CD4-positive, alpha-beta memory T cell (primary cell): ENCODE measurements at regions of chr19 and their contacts with region 1.

Region 1: DNA sequence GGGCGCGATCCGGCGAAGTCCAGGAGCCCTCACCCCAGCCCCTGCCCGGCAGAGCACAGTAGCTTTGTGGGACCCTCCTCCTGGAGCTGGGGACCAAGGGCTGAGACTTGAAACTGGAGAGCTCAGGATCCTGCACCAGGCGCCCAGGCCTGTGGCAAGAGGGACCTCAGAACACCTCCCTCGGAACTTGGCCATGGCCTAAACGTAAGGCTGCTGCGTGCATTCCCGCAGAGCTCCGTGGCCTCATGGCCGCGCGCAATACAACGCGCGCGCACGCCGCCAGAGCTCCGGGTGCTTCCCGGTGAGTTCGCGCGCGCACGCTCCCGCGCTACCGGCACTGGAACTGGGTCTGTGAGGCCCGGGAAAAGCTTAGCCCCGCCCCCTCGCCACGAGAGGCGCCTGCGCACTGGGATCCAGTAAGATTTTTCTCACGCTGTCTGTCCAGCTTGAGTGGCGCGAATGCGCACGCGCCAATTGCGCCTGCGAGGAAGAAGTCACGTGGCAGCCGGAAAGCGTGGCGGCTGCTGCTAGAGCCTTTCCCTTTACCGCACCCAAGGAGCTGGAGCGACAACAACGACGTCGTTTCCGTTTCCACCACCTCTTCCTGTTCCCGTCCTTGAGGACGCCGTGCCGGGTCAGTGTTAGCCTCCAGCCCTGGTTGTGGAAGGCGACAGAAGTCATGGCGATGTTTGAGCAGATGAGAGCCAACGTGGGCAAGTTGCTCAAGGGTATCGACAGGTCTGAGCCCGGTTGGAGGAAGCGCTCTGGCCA is at the start of gene EIF3K:
- DNase-seq: peak; percentile 95 to 97 (median 96)
- H3K4me3 ChIP-seq: peak within 1 kb of the TSS; percentile 97 to 99
- H3K4me3 Mint-ChIP-seq: peak within 1 kb of the TSS; percentile 95 to 100 (median 100)
- H3K27ac ChIP-seq: peak within 1 kb of the TSS; percentile 90
- H3K27ac Mint-ChIP-seq: peak within 1 kb of the TSS; percentile 93 to 100 (median 99)
- H3K4me1 ChIP-seq: peaks cover 57% of the 10 kb centered on the region
- H3K4me1 Mint-ChIP-seq: peaks cover 28 to 60% (median 45%) of the 10 kb centered on the region in 4 donors
- H3K27me3 ChIP-seq: no peaks in the 10 kb centered on the region
- H3K27me3 Mint-ChIP-seq: no peaks in the 10 kb centered on the region
- total RNA-seq, gene EIF3K: 320 to 340 TPM

Region 2: DNA sequence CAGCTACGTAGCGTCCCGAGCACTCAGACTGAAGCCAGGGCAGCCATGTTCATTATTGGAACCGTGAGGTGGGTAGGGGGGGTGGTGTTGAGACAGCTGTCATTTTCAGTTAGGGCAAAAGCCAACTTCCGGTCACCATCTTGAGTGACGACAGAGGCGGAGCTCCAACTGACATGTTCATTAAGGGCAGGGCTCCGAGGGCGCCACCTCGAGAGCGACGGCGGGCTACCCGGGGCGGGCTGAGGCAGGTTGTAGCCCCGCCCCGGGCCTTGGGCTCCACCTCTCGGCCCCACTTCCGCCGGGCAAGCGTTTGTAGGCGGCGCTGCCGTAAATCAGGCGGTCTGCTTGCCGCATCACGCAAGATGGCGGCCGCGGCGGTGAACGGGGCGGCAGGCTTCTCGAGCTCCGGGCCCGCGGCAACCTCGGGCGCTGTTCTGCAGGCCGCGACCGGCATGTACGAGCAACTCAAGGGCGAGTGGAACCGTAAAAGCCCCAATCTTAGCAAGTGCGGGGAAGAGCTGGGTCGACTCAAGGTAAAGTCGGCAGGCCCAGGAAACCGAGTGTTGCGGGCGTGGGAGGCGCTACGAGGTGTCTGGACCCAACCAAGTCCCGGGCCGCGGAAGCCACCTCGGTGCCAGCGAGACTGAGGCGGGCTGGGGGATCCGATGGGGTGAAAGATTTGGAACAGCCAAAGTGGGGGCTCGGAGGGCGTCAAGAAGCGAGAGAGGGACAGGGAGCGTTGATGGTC is 244.2 kb before region 1 on chr19 and contains the start of gene PSMD8:
- CTCF ChIA-PET with region 1: no interaction called
- POLR2A ChIA-PET with region 1: interaction called, 9 read pairs
- intact Hi-C with region 1: loop called (anchors 10 kb)
- DNase-seq: peak; percentile 98 to 99 (median 99)
- H3K4me3 ChIP-seq: peak within 1 kb of the TSS; percentile 71 to 97
- H3K4me3 Mint-ChIP-seq: peak within 1 kb of the TSS; percentile 96 to 99 (median 98)
- H3K27ac ChIP-seq: peak within 1 kb of the TSS; percentile 94
- H3K27ac Mint-ChIP-seq: peak within 1 kb of the TSS; percentile 90 to 99 (median 98)
- H3K4me1 ChIP-seq: peaks cover 30% of the 10 kb centered on the region
- H3K4me1 Mint-ChIP-seq: peaks cover 19 to 34% (median 24%) of the 10 kb centered on the region in 4 donors
- H3K27me3 ChIP-seq: no peaks in the 10 kb centered on the region
- H3K27me3 Mint-ChIP-seq: peaks cover 2% of the 10 kb centered on the region in 2 donors
- total RNA-seq, gene PSMD8: 89.6 to 90.6 TPM

Region 3: DNA sequence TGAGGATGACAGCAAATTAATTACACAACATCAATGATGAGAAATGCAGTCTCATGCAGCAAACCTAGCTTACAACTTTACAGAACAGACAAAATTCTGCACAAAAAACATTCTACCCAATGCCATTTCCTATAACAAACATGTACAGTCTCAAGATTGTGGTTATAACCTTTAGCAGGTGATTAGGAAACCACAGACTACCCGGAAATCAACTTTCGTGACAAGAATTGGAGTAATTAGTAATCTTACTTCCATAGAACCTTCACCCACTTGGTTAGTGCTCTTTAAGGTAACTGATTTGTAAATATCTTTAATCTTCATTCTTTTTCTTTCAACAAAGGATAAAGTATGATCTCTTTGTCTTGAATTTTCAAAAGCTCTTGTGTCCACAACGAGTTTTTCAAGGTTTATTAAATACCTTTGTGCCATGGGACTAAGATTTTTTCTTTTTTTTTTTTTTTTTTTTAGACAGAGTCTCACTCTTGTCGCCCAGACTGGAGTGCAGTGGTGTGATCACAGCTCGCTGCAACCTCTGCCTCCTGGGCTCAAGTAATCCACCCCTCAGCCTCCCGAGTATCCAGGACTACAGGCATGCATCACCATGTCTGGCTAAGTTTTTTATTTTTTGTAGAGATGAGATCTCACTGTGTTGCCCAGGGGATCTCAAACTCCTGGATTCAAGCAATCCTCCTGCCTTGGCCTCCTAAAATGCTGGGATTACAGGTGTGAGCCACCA is 79.8 kb before region 1 on chr19:
- CTCF ChIA-PET with region 1: interaction called, 31 read pairs
- POLR2A ChIA-PET with region 1: interaction called, 36 read pairs
- intact Hi-C with region 1: loop called (anchors 1 kb)
- DNase-seq: peak; percentile 66 to 81 (median 72)
- H3K4me3 ChIP-seq: peak overlapping the region in 1 of 2 donors; percentile 33
- H3K4me3 Mint-ChIP-seq: peak overlapping the region; percentile 43 to 82 (median 69)
- H3K27ac ChIP-seq: peak overlapping the region; percentile 12
- H3K27ac Mint-ChIP-seq: peak overlapping the region; percentile 82 to 95 (median 87)
- H3K4me1 ChIP-seq: peaks cover 44% of the 10 kb centered on the region
- H3K4me1 Mint-ChIP-seq: peaks cover 24 to 61% (median 41%) of the 10 kb centered on the region in 4 donors
- H3K27me3 ChIP-seq: no peaks in the 10 kb centered on the region
- H3K27me3 Mint-ChIP-seq: no peaks in the 10 kb centered on the region

Region 4: DNA sequence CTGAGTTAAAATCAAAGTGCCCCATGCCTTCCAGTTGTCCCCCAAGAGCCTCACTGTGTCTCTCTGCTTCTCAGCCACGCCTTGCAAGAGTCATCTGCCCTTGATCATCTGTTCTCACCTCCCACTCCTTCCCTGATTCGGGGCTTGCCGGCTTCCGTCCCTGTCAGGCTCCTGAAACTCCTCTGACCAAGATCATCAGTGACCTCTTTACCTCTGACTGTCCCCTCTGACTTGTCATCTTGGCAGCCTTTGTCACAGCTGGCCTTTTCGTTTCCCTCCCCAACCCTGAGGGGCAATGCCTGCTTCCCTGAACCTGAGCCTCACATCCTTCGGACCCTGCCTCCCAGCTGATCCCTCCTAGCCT is 67.3 kb before region 1 on chr19:
- CTCF ChIA-PET with region 1: interaction called, 18 read pairs
- POLR2A ChIA-PET with region 1: interaction called, 15 read pairs
- intact Hi-C with region 1: loop called (anchors 2 kb)
- DNase-seq: no peak
- H3K4me3 ChIP-seq: no peak overlapping the region
- H3K4me3 Mint-ChIP-seq: peak overlapping the region in 6 of 8 donors; percentile 7 to 64 (median 29)
- H3K27ac ChIP-seq: no peak overlapping the region
- H3K27ac Mint-ChIP-seq: peak overlapping the region in 5 of 7 donors; percentile 38 to 74 (median 64)
- H3K4me1 ChIP-seq: peaks cover 25% of the 10 kb centered on the region
- H3K4me1 Mint-ChIP-seq: peaks cover 18 to 36% (median 23%) of the 10 kb centered on the region in 4 donors
- H3K27me3 ChIP-seq: no peaks in the 10 kb centered on the region
- H3K27me3 Mint-ChIP-seq: peaks cover 0 to 3% of the 10 kb centered on the region in 2 donors

Region 5: GRCh38 chr19:38647368-38647965 is 28.7 kb after region 1 on chr19 and contains the start of gene ACTN4:
- CTCF ChIA-PET with region 1: interaction called, 3 read pairs
- POLR2A ChIA-PET with region 1: interaction called, 21 read pairs
- intact Hi-C with region 1: no loop called
- DNase-seq: peak; percentile 98 to 100 (median 100)
- H3K4me3 ChIP-seq: peak within 1 kb of the TSS; percentile 80 to 81
- H3K4me3 Mint-ChIP-seq: peak within 1 kb of the TSS; percentile 91 to 98 (median 95)
- H3K27ac ChIP-seq: peak within 1 kb of the TSS; percentile 74
- H3K27ac Mint-ChIP-seq: peak within 1 kb of the TSS; percentile 85 to 94 (median 91)
- H3K4me1 ChIP-seq: peaks cover 50% of the 10 kb centered on the region
- H3K4me1 Mint-ChIP-seq: peaks cover 29 to 52% (median 41%) of the 10 kb centered on the region in 4 donors
- H3K27me3 ChIP-seq: no peaks in the 10 kb centered on the region
- H3K27me3 Mint-ChIP-seq: no peaks in the 10 kb centered on the region
- total RNA-seq, gene ACTN4: 151 to 155 TPM